Activated CD4-positive, alpha-beta memory T cell treated with anti-CD3 and anti-CD28 coated beads for 36 hours (primary cell): ENCODE measurements at regions of chr4 and their contacts with region 1.

Region 1: GRCh38 chr4:89294573-89295269 is 12.9 kb downstream of the GPRIN3 start:
- DNase-seq: no peak
- H3K4me3 Mint-ChIP-seq: peak overlapping the region; percentile 57
- H3K27ac Mint-ChIP-seq: peak overlapping the region; percentile 97
- H3K4me1 Mint-ChIP-seq: peaks cover 84% of the 10 kb centered on the region
- H3K27me3 Mint-ChIP-seq: no peaks in the 10 kb centered on the region

Region 2: DNA sequence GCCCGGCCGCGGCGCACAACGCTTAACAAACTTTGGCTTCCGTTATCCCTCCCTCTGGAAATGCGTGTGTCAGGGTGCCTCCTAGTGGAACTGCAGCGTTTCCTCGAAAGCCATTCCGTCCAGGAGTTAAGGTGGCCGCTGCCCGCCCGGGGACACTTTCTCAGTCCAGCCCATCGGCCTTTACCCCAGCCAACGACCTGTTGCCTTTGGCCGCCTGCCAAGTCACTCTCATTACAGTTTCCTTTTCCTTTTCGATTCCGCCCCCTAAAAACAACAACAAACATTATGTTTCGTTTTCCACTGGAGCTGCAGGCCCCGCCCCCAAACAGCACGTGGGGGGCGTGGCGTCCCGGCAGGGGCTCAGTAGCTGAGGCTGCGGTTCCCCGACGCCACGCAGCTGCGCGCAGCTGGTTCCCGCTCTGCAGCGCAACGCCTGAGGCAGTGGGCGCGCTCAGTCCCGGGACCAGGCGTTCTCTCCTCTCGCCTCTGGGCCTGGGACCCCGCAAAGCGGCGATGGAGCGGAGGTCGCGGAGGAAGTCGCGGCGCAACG is 837.9 kb before region 1 on chr4 and contains the start of gene HERC5:
- CTCF ChIA-PET with region 1: no interaction called
- POLR2A ChIA-PET with region 1: no interaction called
- intact Hi-C with region 1: loop called (anchors 10 kb)
- DNase-seq: peak; percentile 94
- H3K4me3 Mint-ChIP-seq: peak within 1 kb of the TSS; percentile 100
- H3K27ac Mint-ChIP-seq: peak within 1 kb of the TSS; percentile 97
- H3K4me1 Mint-ChIP-seq: peaks cover 12% of the 10 kb centered on the region
- H3K27me3 Mint-ChIP-seq: peaks cover 3% of the 10 kb centered on the region
- total RNA-seq, gene HERC5: 32.3 to 34.0 TPM

Region 3: DNA sequence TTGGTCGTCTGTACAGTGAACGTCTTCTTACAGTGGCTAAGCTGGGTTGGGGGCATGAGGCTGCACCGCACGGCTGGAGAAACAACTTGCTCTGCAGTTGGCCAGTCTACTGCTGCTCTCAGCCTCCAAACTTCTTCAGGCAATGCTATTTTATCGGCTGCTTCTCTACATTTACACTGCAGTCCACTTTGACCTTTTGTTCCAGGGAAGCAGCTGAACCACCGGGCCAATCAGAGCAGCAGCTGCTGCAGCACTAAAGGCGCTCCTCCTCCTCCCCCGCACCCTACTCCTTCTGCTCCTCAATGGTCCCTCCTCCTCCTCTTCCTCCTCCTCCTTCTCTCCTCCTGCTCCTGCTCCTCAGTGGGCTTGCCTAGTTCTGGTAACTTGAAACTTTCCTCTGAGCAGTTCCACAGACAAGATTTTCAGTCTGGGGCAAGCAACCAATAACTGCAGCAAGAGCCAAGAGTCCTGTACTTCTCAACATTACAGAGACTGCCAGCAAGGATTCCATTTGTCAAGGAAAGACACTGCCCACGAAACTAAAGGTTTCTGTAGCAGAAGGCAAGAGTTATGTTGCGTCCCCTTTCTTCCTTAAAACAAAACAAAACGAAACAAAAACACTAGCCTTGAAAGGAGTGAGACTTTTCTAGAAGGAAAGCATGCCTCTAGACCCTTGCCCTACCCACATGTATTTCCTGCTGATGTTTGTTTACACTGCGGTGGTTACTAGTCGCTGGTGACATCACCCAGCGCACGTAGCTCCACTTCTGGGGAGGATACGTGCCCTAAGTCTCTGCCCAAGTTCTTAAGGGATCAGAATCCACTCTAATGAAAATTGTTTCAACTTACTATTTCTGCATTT is 471.4 kb before region 1 on chr4:
- CTCF ChIA-PET with region 1: no interaction called
- POLR2A ChIA-PET with region 1: no interaction called
- intact Hi-C with region 1: loop called (anchors 5 kb)
- DNase-seq: peak; percentile 79
- H3K4me3 Mint-ChIP-seq: peak overlapping the region; percentile 87
- H3K27ac Mint-ChIP-seq: peak overlapping the region; percentile 84
- H3K4me1 Mint-ChIP-seq: peaks cover 37% of the 10 kb centered on the region
- H3K27me3 Mint-ChIP-seq: no peaks in the 10 kb centered on the region

Region 4: DNA sequence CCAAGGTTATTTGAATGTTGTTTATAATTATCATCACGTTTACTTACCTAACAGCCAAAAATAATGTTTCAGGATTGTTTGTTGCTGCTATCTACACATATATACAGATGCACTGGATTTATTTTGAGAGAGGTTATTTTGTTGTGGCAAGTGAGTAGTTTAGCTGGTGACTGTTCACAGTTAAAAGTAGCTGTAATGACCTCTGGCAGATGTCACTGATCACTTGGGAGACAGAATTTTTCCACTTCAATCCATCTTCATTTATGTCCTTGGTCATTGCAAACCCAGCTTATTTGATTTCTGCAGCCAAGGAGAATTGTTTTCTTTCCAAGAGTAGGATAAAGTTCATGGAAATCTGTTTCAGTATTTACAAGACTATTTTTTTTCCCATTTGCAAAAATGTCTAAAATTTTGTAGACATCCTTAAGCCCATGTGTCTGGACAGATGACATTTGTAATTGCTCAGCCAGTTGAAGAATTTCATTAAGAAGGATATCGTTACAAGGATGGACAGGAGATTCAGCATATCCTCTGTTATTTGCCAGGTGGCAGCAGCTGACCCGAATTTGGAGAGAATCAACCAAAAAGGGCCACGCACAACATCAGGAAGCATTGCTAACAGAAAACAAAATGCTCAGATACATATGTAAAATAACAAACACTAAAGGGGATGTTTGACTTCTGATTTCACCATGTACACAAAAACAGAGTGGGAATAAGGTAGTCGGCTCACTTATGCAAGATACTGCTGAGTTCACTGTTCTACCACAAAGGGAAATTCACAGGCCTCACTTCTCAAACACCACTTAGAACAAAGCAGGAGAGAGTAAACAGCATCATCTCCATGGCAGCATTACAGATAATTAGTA is 51.6 kb before region 1 on chr4:
- CTCF ChIA-PET with region 1: no interaction called
- POLR2A ChIA-PET with region 1: interaction called, 4 read pairs
- intact Hi-C with region 1: loop called (anchors 1 kb)
- DNase-seq: no peak
- H3K4me3 Mint-ChIP-seq: no peak overlapping the region
- H3K27ac Mint-ChIP-seq: peak overlapping the region; percentile 70
- H3K4me1 Mint-ChIP-seq: peaks cover 51% of the 10 kb centered on the region
- H3K27me3 Mint-ChIP-seq: no peaks in the 10 kb centered on the region

Region 5: DNA sequence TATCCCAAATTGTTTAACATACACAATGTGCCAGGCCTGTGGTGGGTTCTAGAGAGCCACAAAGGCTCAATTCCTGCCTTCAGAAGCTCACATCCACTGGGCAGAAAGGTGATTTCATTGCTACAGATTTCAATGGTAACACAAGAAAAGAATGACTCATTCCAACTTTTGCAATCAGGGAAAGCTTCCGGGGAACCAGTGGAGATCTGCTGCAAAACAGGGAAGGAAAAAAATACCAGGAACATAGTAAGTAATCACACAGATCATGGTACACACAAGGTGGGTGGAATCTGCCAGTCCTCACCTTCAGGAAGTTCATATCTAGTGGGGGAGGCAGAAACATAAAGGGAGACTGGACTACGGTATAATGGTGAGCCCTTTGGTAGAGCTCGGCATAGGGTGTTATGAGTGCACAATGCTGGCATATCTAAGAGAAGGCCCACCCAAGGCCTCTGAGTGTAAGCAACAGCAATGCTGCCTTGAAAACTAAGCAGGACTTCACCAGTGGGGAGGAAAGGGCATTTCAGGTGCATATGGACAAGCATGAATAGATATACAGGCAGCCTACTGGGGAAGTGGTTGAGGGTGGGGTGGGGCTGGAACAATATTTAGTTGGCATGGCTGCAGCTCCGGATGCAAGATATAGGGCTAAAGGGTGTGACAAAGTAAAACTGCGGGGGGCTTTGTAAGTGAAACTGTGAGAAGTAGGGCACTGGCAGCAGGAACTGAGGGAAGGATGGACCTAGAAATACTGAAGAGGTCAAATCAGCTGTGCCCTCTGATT is 11.3 kb before region 1 on chr4:
- CTCF ChIA-PET with region 1: interaction called, 60 read pairs
- POLR2A ChIA-PET with region 1: interaction called, 139 read pairs
- intact Hi-C with region 1: loop called (anchors 1 kb)
- DNase-seq: peak; percentile 65
- H3K4me3 Mint-ChIP-seq: peak overlapping the region; percentile 20
- H3K27ac Mint-ChIP-seq: peak overlapping the region; percentile 77
- H3K4me1 Mint-ChIP-seq: peaks cover 72% of the 10 kb centered on the region
- H3K27me3 Mint-ChIP-seq: no peaks in the 10 kb centered on the region

Region 6: DNA sequence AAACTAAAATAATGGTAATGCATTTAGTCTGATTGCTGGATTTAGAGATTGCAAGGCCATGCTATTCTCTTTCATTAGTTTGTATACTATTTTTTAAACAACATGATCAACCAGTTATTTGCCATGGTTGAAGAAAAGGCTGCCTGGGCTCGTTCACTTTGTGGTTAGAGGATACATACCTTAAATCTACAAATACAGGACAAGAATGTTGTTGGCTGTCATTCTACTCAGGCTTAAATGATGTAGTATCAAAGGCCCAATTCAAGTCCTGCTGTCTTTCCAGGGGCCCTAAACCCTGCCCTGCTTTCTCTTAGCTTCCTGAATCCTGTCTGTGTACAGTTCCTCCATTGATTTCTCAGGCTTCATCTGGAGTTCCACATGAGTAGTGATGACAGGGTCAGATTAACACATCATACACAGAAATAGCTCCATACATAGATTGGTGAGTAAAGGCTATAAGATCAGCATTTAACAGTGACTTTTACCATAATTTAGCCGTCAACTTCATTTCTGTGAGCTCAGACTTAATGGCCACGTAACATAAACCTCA is 127.8 kb after region 1 on chr4:
- CTCF ChIA-PET with region 1: no interaction called
- POLR2A ChIA-PET with region 1: no interaction called
- intact Hi-C with region 1: no loop called
- DNase-seq: no peak
- H3K4me3 Mint-ChIP-seq: no peak overlapping the region
- H3K27ac Mint-ChIP-seq: no peak overlapping the region
- H3K4me1 Mint-ChIP-seq: peaks cover 3% of the 10 kb centered on the region
- H3K27me3 Mint-ChIP-seq: no peaks in the 10 kb centered on the region

Region 7: GRCh38 chr4:89434364-89434988 is 139.8 kb after region 1 on chr4:
- CTCF ChIA-PET with region 1: interaction called, 6 read pairs
- POLR2A ChIA-PET with region 1: no interaction called
- intact Hi-C with region 1: loop called (anchors 2 kb)
- DNase-seq: no peak
- H3K4me3 Mint-ChIP-seq: no peak overlapping the region
- H3K27ac Mint-ChIP-seq: no peak overlapping the region
- H3K4me1 Mint-ChIP-seq: peaks cover 12% of the 10 kb centered on the region
- H3K27me3 Mint-ChIP-seq: no peaks in the 10 kb centered on the region